Activated CD4-positive, alpha-beta T cell treated with anti-CD3 and anti-CD28 coated beads, Interleukin-2, amount 10 ng/mL, durations not matched to agents 7 days and 5 days (primary cell): ENCODE measurements at regions of chr1 and their contacts with region 1.

Region 1: GRCh38 chr1:62318756-62319544 is at the start of gene KANK4:
- DNase-seq: no peak
- H3K4me3 Mint-ChIP-seq: no peak within 1 kb of the TSS
- H3K27ac Mint-ChIP-seq: no peak within 1 kb of the TSS
- H3K4me1 Mint-ChIP-seq: no peaks in the 10 kb centered on the region
- H3K27me3 Mint-ChIP-seq: peaks cover 38% of the 10 kb centered on the region
- total RNA-seq, gene KANK4: not detected

Region 2: DNA sequence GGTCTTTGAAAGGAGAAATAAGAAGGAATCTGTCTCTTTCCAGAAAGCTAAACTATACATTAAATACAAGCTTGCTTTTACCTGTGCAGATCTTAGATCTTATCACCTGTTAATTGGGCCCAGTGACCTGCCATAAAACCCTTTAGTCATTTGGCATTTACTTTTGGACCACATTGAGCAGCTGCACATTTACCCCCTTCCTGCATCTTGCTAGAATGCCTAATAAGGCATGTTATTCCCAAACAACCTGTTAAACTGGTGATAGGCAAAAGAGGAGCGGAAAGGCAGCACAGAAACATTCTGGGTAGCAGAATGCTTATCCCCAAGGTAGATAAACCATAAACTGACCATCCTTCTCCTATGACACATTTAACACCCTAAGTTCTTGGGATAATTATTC is 164.3 kb before region 1 on chr1:
- CTCF ChIA-PET with region 1: no interaction called
- POLR2A ChIA-PET with region 1: interaction called, 10 read pairs
- DNase-seq: no peak
- H3K4me3 Mint-ChIP-seq: no peak overlapping the region
- H3K27ac Mint-ChIP-seq: no peak overlapping the region
- H3K4me1 Mint-ChIP-seq: no peaks in the 10 kb centered on the region
- H3K27me3 Mint-ChIP-seq: no peaks in the 10 kb centered on the region